Left ventricle myocardium superior (tissue), 1 donor: ENCODE measurements at regions of chr1 and their contacts with region 1.

Region 1: GRCh38 chr1:64136752-64137411 is 66.5 kb upstream of the UBE2U start:
- DNase-seq: peak; percentile 79
- ATAC-seq: peak; percentile 90

Region 2: GRCh38 chr1:63691701-63692425 is 445.0 kb before region 1 on chr1:
- intact Hi-C with region 1: loop called (anchors 5 kb)
- DNase-seq: no peak
- ATAC-seq: peak; percentile 89

Region 3: DNA sequence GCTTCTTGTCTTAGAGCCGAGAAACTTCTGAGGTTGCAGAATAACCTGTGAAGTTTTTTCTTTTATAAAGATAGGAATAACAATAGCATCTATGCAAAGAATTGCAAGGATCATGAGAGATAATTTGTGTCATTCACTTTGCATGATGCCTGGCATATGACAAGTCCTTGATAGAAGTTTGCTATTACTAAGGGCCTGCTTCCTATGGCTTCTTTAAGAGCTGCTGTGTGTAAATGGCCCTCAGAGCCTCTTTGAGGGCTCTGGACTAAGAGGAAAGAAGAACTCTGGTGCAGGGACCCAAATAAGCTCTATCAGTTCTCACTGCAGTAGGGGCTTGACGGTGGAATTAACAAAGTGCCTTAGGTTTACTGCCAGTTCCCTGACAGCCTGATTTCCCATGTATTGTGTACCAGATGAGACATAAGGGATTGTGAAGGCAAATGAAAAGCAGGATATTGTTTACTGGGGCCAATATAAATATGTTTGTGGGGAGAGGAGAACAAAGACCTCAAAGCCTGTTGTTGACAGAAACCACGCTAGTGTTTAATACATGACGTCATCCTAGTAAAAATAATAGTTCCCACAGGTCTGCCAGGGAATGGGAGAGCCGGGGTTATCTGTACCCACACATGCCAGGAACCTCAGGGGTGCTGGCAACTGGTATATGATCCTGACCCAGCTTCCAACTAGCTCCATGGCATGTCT is 64.6 kb before region 1 on chr1:
- intact Hi-C with region 1: no loop called
- DNase-seq: no peak
- ATAC-seq: peak; percentile 76